ENCODE measurements at regions of chr22 and their contacts with region 1.

Region 1: GRCh38 chr22:43187171-43188099 is 501 bp upstream of the TTLL12 start:
- DNase-seq: peak; percentile 98
- H3K4me3 Mint-ChIP-seq: peak overlapping the region; percentile 81
- H3K27ac Mint-ChIP-seq: peak overlapping the region; percentile 92
- H3K4me1 Mint-ChIP-seq: peaks cover 16% of the 10 kb centered on the region
- H3K27me3 Mint-ChIP-seq: peaks cover 6% of the 10 kb centered on the region

Region 2: DNA sequence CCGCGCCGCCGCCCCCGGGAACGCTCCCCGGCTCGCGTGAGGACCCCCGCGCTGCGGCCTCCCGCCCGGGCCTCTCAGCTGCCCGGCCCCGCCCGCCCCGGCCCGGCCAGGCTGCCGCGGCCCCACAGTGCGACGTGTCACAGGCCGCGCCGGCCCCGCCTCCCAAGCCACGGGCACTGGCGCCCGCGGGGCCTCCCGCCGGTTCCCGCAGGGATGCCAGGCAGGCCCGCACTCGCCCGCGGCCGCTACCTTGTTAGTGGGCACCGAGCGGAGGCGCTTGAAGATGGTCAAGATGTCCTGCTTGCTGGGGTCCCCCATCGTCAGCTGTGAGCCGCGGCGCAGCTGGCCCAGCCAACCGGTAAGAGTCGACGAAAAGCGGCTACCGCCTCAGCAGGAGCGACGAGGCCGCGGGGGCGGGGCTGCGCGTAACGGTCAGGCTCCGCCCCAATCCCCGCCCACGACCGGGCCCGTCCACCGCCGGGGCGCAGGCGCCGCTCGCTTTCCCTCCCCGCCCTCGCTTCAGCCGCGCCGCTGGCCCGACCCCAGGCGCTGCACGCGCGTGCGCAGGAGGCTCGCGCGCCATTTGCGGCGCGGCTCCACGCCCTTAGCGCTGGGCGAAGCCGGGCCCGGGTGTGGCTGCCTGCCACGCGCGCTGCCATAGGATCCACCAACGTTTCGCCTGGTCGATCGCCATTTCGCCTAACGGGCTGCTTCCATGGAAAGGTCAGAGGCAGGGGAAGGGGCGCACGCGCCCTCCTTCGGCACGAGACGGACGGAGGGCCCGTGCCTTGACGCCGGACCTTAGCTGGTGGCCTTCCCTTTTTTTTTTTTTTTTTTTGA is 330.4 kb before region 1 on chr22 and contains the start of gene ARFGAP3:
- intact Hi-C with region 1: loop called (anchors 5 kb)
- DNase-seq: peak; percentile 94
- H3K4me3 Mint-ChIP-seq: peak within 1 kb of the TSS; percentile 93
- H3K27ac Mint-ChIP-seq: peak within 1 kb of the TSS; percentile 92
- H3K4me1 Mint-ChIP-seq: peaks cover 7% of the 10 kb centered on the region
- H3K27me3 Mint-ChIP-seq: no peaks in the 10 kb centered on the region
- total RNA-seq, gene ARFGAP3: 38.0 and 42.3 TPM in 2 replicates

Region 3: GRCh38 chr22:42959576-42960509 is 227.6 kb before region 1 on chr22:
- intact Hi-C with region 1: no loop called
- DNase-seq: no peak
- H3K4me3 Mint-ChIP-seq: peak overlapping the region; percentile 43
- H3K27ac Mint-ChIP-seq: peak overlapping the region; percentile 37
- H3K4me1 Mint-ChIP-seq: peaks cover 43% of the 10 kb centered on the region
- H3K27me3 Mint-ChIP-seq: no peaks in the 10 kb centered on the region

Region 4: GRCh38 chr22:43110444-43110926 is 77.0 kb before region 1 on chr22 and contains the start of gene BIK:
- intact Hi-C with region 1: loop called (anchors 2 kb)
- DNase-seq: peak; percentile 23
- H3K4me3 Mint-ChIP-seq: peak within 1 kb of the TSS; percentile 67
- H3K27ac Mint-ChIP-seq: no peak within 1 kb of the TSS
- H3K4me1 Mint-ChIP-seq: no peaks in the 10 kb centered on the region
- H3K27me3 Mint-ChIP-seq: peaks cover 41% of the 10 kb centered on the region
- total RNA-seq, gene BIK: 2.3 and 2.5 TPM in 2 replicates

Region 5: DNA sequence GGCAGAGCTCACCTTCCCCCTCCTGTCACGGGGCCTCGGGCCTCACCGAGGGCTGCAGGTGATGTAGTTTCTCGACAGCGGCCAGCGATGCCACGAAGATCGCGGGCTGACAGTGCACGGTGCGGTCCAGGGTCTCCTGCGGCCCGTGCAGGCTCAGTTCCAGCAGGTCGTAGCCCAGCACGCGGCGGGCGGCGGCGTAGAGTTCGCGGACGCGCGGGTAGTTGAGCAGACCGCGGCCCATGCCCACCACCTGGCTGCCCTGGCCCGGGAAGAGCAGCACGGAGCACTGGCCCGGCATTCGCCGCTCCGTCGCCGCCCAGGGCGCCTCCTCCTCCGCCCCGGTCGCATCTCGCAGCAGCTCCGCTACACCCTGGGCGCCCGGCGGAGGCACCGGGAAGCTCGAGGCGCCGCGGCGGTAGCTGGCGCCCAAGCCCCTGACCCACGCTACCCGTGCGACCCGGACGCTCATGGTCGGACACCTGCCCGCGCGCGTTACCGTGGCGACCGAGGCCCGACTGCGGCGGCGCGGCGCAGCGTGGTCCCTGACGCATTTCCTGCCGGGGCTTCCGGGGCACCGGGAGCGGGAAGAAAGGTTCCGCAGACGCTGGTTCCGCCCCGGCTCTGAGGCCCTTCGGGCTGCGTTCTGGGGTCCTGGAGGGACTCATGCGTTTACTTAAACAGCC is 44.4 kb before region 1 on chr22 and contains the start of gene MCAT:
- intact Hi-C with region 1: loop called (anchors 2 kb)
- DNase-seq: peak; percentile 87
- H3K4me3 Mint-ChIP-seq: peak within 1 kb of the TSS; percentile 89
- H3K27ac Mint-ChIP-seq: peak within 1 kb of the TSS; percentile 92
- H3K4me1 Mint-ChIP-seq: peaks cover 33% of the 10 kb centered on the region
- H3K27me3 Mint-ChIP-seq: no peaks in the 10 kb centered on the region
- total RNA-seq, gene MCAT: 20.3 and 23.4 TPM in 2 replicates

Region 6: GRCh38 chr22:43151251-43152002 is 36.0 kb before region 1 on chr22 and contains the start of gene TSPO:
- intact Hi-C with region 1: loop called (anchors 1 kb)
- DNase-seq: peak; percentile 44
- H3K4me3 Mint-ChIP-seq: peak within 1 kb of the TSS; percentile 94
- H3K27ac Mint-ChIP-seq: peak within 1 kb of the TSS; percentile 91
- H3K4me1 Mint-ChIP-seq: peaks cover 17% of the 10 kb centered on the region
- H3K27me3 Mint-ChIP-seq: no peaks in the 10 kb centered on the region
- total RNA-seq, gene TSPO: 115 and 121 TPM in 2 replicates

Region 7: GRCh38 chr22:43168416-43169309 is 18.8 kb before region 1 on chr22:
- intact Hi-C with region 1: no loop called
- DNase-seq: no peak
- H3K4me3 Mint-ChIP-seq: no peak overlapping the region
- H3K27ac Mint-ChIP-seq: no peak overlapping the region
- H3K4me1 Mint-ChIP-seq: no peaks in the 10 kb centered on the region
- H3K27me3 Mint-ChIP-seq: no peaks in the 10 kb centered on the region

Region 8: DNA sequence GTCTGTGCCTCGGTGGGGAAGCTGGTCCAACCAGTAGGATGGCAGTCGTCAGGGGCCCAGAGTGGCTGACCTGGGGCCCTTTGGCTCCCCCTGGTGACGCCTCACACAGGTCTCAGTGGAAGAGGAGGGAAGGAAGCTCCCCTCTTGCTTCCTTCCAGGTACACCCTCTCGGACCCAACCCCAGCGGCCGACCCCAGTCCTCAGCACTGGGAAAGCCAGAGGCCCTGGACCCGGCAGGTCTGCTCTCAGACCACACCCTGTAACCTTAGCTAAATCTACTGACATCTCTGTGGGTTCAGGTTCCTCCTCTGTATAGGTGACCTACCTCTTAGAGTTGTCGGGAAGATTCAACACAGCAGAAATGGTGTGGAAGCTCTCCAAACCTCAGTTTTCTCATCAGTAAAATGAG is 159.1 kb after region 1 on chr22:
- intact Hi-C with region 1: no loop called
- DNase-seq: peak; percentile 54
- H3K4me3 Mint-ChIP-seq: no peak overlapping the region
- H3K27ac Mint-ChIP-seq: no peak overlapping the region
- H3K4me1 Mint-ChIP-seq: peaks cover 9% of the 10 kb centered on the region
- H3K27me3 Mint-ChIP-seq: peaks cover 24% of the 10 kb centered on the region

Region 9: DNA sequence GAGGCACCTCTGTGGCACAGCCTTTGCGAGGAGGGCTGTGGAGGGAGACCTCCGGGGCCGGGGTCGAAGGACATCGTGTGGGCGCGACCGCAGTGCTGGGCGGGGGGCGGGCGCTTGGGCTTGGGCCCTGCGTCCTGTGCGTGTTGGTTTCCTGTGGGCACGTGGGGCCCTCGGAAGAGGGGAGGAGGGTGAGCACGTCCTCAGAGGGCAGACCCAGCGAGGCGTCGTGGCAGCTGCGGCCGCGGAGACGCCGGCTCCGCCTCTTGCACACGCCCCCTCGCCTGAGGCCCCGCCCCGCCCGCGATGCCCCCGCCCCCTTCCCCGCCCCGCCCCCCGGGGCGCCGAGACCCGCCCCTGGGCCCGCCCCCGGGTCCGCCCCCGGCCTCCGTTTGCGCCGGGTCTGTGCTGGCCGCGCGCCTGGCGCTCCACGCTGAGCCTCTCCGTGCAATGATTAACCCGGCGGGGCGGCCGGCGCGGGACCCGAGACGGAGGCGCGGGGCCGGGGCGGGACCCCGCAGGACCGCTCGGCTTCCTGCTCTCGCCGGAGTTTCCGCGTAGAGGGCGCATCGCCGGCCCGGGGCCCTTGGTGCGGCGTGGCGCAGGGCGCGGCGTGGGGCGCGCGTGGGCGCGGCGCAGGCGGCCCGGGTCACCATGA is 1514.5 kb after region 1 on chr22 and contains the start of gene PRR5:
- intact Hi-C with region 1: loop called (anchors 2 kb)
- DNase-seq: peak; percentile 78
- H3K4me3 Mint-ChIP-seq: peak within 1 kb of the TSS; percentile 72
- H3K27ac Mint-ChIP-seq: peak within 1 kb of the TSS; percentile 40
- H3K4me1 Mint-ChIP-seq: no peaks in the 10 kb centered on the region
- H3K27me3 Mint-ChIP-seq: peaks cover 6% of the 10 kb centered on the region
- total RNA-seq, gene PRR5: 19.7 and 21.6 TPM in 2 replicates